ENCODE measurements at regions of chr2 and their contacts with region 1.

Region 1: DNA sequence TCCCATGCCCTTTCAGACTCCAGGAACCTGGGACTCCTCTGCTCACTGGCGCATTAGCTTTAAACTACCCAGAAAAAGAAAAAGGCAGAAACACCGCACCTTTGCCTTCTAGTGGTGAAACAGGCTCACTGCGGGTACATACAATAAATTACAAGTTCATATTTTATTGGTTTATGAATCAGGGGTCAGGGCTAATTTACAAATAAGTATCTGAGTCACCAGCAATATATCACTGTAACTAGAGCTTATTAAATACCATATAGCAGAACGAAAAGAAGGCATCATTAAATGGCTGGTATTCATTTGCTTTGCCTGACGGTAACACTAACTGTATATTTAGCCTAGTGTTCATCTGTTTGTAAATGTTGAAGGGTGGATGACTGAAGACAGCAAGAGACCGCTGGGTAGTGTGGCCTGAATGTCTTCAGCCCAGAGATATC is 26.9 kb upstream of the DTNB start:
- DNase-seq: peak; percentile 65
- H3K4me3 Mint-ChIP-seq: no peak overlapping the region
- H3K27ac Mint-ChIP-seq: no peak overlapping the region
- H3K4me1 Mint-ChIP-seq: peaks cover 7% of the 10 kb centered on the region
- H3K27me3 Mint-ChIP-seq: peaks cover 7% of the 10 kb centered on the region
- CTCF ChIP-seq: peak; percentile 69

Region 2: DNA sequence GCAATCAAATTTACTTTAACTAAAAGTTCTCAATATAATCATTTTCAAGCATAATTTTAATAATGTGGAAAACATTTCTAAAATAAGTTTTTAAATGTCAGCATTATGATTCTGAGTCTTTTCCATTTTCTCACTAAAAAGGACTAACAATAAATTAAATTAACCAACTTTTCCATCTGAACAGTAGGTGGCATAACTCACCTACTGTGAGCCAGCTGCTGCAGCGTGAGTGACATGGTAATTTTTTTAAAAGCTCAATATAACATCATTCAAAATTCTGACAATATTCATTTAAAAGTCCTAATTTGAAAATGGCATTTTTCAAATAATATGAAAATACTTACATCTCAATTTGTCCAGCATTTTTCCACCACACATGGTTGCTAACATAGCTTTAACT is 93.3 kb before region 1 on chr2:
- CTCF ChIA-PET with region 1: interaction called, 43 read pairs
- intact Hi-C with region 1: loop called (anchors 1 kb)
- DNase-seq: no peak
- H3K4me3 Mint-ChIP-seq: no peak overlapping the region
- H3K27ac Mint-ChIP-seq: no peak overlapping the region
- H3K4me1 Mint-ChIP-seq: no peaks in the 10 kb centered on the region
- H3K27me3 Mint-ChIP-seq: no peaks in the 10 kb centered on the region
- CTCF ChIP-seq: peak; percentile 56

Region 3: DNA sequence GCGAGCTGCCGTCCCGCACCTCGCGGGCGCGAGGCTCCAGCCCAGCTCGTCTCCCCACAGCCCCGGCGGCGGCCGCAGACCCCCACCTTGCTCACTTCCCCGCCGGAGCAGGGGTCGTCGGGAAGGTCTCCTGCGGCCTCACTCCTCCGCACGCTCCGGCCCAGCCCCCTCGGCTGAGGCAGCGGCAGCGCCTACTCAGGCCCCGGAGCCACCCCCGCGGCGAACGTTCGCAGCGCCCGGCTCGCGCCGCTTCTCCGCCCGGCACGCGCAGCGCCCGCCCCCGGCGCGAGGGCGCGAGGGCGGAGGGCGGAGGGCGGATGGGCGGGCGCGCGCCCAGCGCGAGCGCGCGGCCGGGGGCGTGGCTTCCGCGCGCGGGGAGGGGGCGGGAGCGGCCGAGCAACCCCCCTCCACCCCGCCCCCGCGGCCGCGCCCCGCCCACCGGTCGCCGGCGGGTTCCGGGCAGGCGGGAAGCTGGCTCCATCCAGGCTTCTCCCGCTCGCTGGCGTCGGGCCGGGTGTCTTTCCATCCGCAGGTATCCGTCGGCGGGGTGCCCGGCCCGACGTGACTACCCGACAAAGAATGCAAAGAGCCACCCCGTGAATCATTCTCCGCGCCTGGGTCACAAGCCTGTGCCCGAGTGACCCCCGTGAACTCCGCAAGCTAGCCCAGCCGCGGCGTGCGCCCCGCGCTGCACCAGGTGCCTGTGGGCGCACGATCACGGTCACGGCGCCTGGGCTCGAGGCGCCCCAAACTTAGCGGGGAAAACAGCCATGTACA is 26.8 kb before region 1 on chr2 and contains the start of gene DTNB:
- CTCF ChIA-PET with region 1: interaction called, 10 read pairs
- intact Hi-C with region 1: no loop called
- DNase-seq: peak; percentile 88
- H3K4me3 Mint-ChIP-seq: peak within 1 kb of the TSS; percentile 88
- H3K27ac Mint-ChIP-seq: peak within 1 kb of the TSS; percentile 80
- H3K4me1 Mint-ChIP-seq: peaks cover 20% of the 10 kb centered on the region
- H3K27me3 Mint-ChIP-seq: peaks cover 21% of the 10 kb centered on the region
- CTCF ChIP-seq: no peak
- total RNA-seq, gene DTNB: 17.3 and 27.3 TPM in 2 replicates

Measured in Calu3 (cell line).